PC-3 (cell line): ENCODE measurements at regions of chr5 and their contacts with region 1.

Region 1: GRCh38 chr5:85985167-85985566 is 632.6 kb upstream of the COX7C start:
- DNase-seq: peak; percentile 87
- ATAC-seq: peak; percentile 96
- H3K4me3 ChIP-seq: no peak overlapping the region
- H3K27ac ChIP-seq: peak overlapping the region; percentile 42
- H3K4me1 ChIP-seq: peaks cover 21% of the 10 kb centered on the region
- H3K27me3 ChIP-seq: no peaks in the 10 kb centered on the region
- CTCF ChIP-seq: no peak

Region 2: GRCh38 chr5:85614489-85614888 is 370.7 kb before region 1 on chr5:
- CTCF ChIA-PET with region 1: no interaction called
- POLR2A ChIA-PET with region 1: no interaction called
- intact Hi-C with region 1: loop called (anchors 1 kb)
- DNase-seq: peak; percentile 61
- ATAC-seq: peak; percentile 96
- H3K4me3 ChIP-seq: no peak overlapping the region
- H3K27ac ChIP-seq: no peak overlapping the region
- H3K4me1 ChIP-seq: peaks cover 7% of the 10 kb centered on the region; the same call in 1 of the 2 replicates
- H3K27me3 ChIP-seq: no peaks in the 10 kb centered on the region
- CTCF ChIP-seq: no peak

Region 3: GRCh38 chr5:86008293-86008692 is 23.1 kb after region 1 on chr5:
- CTCF ChIA-PET with region 1: no interaction called
- POLR2A ChIA-PET with region 1: no interaction called
- intact Hi-C with region 1: loop called (anchors 1 kb)
- DNase-seq: no peak
- ATAC-seq: peak; percentile 12; the same call in 1 of the 2 replicates
- H3K4me3 ChIP-seq: no peak overlapping the region
- H3K27ac ChIP-seq: peak overlapping the region; percentile 34
- H3K4me1 ChIP-seq: peaks cover 14% of the 10 kb centered on the region
- H3K27me3 ChIP-seq: no peaks in the 10 kb centered on the region
- CTCF ChIP-seq: no peak